ENCODE measurements at regions of chr11 and their contacts with region 1.

Region 1: DNA sequence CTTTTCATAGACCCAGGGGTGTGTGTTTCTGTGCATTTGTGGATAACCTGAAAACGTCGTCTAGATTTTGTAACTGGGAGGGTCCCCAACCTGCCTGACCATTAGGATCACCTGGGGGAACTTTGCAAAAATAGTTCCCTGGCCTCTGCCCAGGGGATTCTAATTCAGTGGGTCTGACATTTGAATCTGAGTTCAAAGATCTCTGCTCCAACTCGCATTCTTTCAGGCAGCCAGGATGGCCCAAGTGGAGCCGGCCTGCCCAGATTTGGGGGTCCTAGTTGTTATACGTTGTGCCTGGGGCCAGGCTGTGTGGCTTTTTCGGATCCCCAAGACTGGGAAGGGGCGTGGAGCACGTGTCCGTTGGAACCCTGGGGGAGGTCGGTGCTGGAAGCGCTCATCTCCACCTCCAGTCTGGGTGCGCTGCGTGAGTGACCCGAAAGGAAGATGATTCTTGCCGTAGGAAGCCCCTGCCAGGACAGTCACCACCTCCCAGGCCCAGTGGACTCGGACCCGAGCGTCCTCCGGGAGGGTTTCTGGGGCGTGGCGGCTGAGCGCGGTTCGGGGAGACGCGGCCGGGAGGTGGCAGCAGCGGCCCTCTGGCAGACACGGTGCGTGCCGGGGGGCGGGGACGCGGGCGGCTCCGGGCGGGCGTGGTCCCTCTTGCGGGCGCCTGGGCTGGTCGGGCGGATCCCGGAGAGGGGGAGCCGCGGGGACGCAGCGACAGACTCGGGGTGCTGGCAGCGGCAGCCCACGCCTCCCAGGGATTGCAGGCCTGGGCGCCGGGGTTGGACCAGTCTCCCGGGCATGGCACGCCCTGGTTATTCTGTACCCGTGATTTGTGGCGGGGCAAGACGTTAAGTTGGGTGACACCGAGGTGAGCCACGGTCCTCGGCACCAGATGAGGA is 29.2 kb upstream of the PLET1 start:
- DNase-seq: peak; percentile 52
- H3K4me3 ChIP-seq: peak overlapping the region; percentile 26 to 70 (median 59)
- H3K27ac ChIP-seq: no peak overlapping the region
- H3K4me1 ChIP-seq: peaks cover 29% of the 10 kb centered on the region
- H3K27me3 ChIP-seq: no peaks in the 10 kb centered on the region
- CTCF ChIP-seq: peak; percentile 77 to 82
- POLR2A ChIP-seq: no peak

Region 2: DNA sequence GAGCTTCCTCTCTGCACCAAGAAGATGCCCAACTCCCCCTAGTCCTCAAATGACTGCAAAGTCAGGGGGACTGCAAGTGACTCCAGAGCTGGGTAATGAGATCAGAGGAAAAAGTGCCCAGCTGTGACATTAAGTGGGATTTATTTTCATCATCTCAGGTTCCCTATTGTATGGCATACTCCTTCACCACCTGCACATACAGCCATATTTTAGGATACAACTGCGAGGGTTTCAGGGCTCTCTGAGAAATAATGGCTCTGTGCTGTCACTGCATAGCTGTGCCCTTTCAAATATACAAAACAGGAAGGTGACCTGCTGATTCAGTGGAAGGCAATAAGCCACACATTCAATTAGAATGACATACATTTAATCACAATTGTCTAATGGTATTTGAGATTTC is 16.4 kb after region 1 on chr11:
- CTCF ChIA-PET with region 1: no interaction called
- POLR2A ChIA-PET with region 1: no interaction called
- dilution Hi-C with region 1: no loop called
- intact Hi-C with region 1: no loop called
- DNase-seq: no peak
- H3K4me3 ChIP-seq: no peak overlapping the region
- H3K27ac ChIP-seq: no peak overlapping the region
- H3K4me1 ChIP-seq: peaks cover 4% of the 10 kb centered on the region
- H3K27me3 ChIP-seq: no peaks in the 10 kb centered on the region
- CTCF ChIP-seq: no peak
- POLR2A ChIP-seq: no peak

Region 3: GRCh38 chr11:112318193-112318592 is 28.4 kb after region 1 on chr11:
- CTCF ChIA-PET with region 1: interaction called, 3 read pairs
- POLR2A ChIA-PET with region 1: no interaction called
- dilution Hi-C with region 1: no loop called
- intact Hi-C with region 1: loop called (anchors 1 kb)
- DNase-seq: peak; percentile 70
- H3K4me3 ChIP-seq: no peak overlapping the region
- H3K27ac ChIP-seq: peak overlapping the region; percentile 73
- H3K4me1 ChIP-seq: peaks cover 26% of the 10 kb centered on the region
- H3K27me3 ChIP-seq: no peaks in the 10 kb centered on the region
- CTCF ChIP-seq: no peak
- POLR2A ChIP-seq: no peak

Region 4: DNA sequence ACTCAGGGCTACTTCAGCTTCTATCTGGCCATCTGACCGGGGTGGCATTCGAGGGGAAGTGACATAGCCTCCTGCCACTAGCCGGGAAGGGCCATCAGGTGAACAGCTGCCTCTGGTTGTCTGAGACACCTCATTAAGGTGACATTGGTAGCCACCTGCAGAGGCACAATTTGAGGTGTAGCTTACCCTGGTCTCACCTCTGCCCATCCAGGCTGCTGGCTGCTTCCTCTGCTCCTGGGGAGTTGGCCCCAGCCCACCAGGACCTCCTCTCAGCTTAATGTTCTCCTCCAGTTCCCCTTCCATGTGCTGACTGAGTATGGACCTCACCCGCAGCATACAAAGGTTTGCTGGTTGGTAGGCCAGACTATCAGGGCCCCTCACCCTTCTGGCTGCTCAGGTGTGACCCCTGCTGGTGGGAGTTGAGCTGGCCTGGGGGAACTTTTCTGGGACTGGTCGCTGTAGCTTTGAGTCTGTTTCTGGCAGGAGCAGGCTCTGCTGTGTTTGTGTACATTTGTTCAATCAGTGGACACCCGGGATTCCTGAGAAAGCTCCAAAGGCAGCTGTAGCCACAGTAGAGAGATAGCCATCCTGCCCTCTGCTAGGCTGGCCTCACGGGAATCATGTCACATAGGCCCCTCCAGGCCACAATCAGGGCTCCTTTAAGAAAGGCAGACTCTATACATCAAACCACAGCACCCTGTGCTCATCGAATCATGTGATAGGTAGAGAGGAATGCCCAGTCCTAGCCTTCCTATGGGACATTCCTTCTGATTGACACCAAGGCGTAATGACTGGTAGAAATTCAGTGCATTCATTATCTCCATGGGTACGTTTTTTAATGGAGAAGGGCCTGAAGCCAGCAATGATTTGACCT is 265.9 kb after region 1 on chr11:
- CTCF ChIA-PET with region 1: interaction called, 25 read pairs
- POLR2A ChIA-PET with region 1: no interaction called
- dilution Hi-C with region 1: no loop called
- intact Hi-C with region 1: loop called (anchors 1 kb)
- DNase-seq: peak; percentile 43
- H3K4me3 ChIP-seq: no peak overlapping the region
- H3K27ac ChIP-seq: no peak overlapping the region
- H3K4me1 ChIP-seq: no peaks in the 10 kb centered on the region
- H3K27me3 ChIP-seq: no peaks in the 10 kb centered on the region
- CTCF ChIP-seq: peak; percentile 69 to 86
- POLR2A ChIP-seq: no peak

Region 5: DNA sequence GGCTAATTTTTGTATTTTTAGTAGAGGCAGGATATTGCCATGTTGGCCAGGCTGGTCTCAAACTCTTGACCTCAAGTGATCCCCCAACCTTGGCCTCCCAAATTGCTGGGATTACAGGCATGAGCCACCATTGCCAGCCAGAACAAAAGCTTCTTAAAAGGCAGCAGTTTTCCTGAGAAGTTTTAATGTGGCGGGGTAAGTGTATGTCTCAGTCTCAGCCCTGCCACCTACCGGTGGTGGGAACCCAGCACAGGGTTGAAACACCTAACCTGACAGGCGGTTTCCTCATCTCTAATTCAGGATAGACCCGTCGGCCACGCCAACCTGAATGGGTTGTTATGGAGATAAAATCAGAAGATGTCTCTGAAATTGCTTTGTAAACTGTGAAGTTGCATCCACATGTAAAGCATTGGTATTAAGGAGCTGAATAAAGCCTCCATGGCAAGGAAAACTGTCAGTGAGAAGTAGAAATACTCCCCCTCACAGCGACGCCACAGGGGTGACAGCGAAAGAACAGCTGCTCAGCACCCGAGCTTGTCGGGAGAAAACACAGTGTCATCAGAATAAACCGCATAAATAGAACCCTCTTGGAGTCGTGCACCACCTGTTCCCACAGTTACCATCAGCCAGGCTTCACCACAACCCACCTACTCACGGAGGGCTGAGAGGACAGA is 505.4 kb after region 1 on chr11:
- CTCF ChIA-PET with region 1: no interaction called
- POLR2A ChIA-PET with region 1: no interaction called
- dilution Hi-C with region 1: no loop called
- intact Hi-C with region 1: loop called (anchors 10 kb)
- DNase-seq: no peak
- H3K4me3 ChIP-seq: no peak overlapping the region
- H3K27ac ChIP-seq: no peak overlapping the region
- H3K4me1 ChIP-seq: no peaks in the 10 kb centered on the region
- H3K27me3 ChIP-seq: no peaks in the 10 kb centered on the region
- CTCF ChIP-seq: peak; percentile 25 to 31
- POLR2A ChIP-seq: no peak

Measured in endothelial cell of umbilical vein (primary cell).